GM12878 (cell line): ENCODE measurements at regions of chr18 and their contacts with region 1.

Region 1: GRCh38 chr18:67694787-67695186 is 178.3 kb upstream of the DSEL start:
- DNase-seq: no peak
- ATAC-seq: no peak
- H3K4me3 ChIP-seq: no peak overlapping the region
- H3K27ac ChIP-seq: no peak overlapping the region
- H3K4me1 ChIP-seq: no peaks in the 10 kb centered on the region
- H3K27me3 ChIP-seq: no peaks in the 10 kb centered on the region
- CTCF ChIP-seq: no peak
- EP300 ChIP-seq: no peak
- POLR2A ChIP-seq: no peak
- RAD21 ChIP-seq: no peak

Region 2: GRCh38 chr18:67634631-67635338 is 60.0 kb before region 1 on chr18:
- CTCF ChIA-PET with region 1: no interaction called
- POLR2A ChIA-PET with region 1: no interaction called
- RAD21 ChIA-PET with region 1: no interaction called
- SMC1A ChIA-PET with region 1: no interaction called
- in situ Hi-C with region 1: no loop called
- intact Hi-C with region 1: loop called (anchors 10 kb)
- DNase-seq: no peak
- ATAC-seq: no peak
- H3K4me3 ChIP-seq: no peak overlapping the region
- H3K27ac ChIP-seq: no peak overlapping the region
- H3K4me1 ChIP-seq: no peaks in the 10 kb centered on the region
- H3K27me3 ChIP-seq: no peaks in the 10 kb centered on the region
- CTCF ChIP-seq: no peak
- EP300 ChIP-seq: no peak
- POLR2A ChIP-seq: no peak
- RAD21 ChIP-seq: no peak